Activated CD8-positive, alpha-beta memory T cell treated with anti-CD3 and anti-CD28 coated beads, Interleukin-2, amount 10 ng/mL, durations not matched to agents 7 days and 5 days (primary cell): ENCODE measurements at regions of chr16 and their contacts with region 1.

Region 1: DNA sequence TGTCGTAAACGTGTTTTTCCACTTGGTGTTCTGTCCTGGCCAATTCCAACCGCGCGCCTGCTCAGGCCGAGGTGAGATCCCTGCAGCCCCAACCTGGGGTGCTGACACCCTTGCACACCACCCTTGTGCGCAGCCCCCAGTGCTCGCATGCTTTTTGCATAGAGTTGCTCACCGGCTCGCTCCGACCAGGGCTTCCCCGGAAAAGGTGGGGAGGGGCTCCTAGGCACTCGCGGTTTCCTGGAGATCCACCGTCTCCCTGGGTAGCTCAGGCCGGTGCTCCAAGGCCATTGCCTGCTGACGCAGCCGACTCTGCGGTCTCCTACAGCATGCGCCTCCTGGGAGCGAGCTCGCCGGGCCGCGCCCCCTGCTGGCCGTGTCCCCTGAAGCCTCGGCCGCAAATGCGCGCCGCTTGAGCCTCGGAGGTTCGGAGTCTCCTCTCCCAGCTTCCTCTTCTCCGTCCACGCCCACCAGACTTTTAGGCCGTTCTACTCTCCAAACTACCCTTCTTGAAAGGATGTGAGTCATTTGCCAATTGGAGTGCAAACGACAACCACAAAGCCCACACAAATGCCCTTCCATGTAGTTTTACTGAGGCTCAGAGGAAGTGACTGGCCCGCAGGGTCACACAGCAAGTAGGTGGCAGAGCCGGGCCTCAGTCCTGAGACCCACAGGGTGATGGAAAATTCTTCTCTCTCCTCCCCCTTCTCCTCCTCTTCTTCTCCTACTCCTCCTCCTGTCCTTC is 7.2 kb upstream of the PDP2 start:
- DNase-seq: peak; percentile 99
- ATAC-seq: peak; percentile 89
- H3K4me3 Mint-ChIP-seq: peak overlapping the region; percentile 78
- H3K27ac Mint-ChIP-seq: peak overlapping the region; percentile 92
- H3K4me1 Mint-ChIP-seq: peaks cover 54% of the 10 kb centered on the region
- H3K27me3 Mint-ChIP-seq: no peaks in the 10 kb centered on the region

Region 2: GRCh38 chr16:66406534-66407221 is 466.4 kb before region 1 on chr16:
- CTCF ChIA-PET with region 1: interaction called, 25 read pairs
- DNase-seq: peak; percentile 91
- ATAC-seq: peak; percentile 93
- H3K4me3 Mint-ChIP-seq: peak overlapping the region; percentile 78
- H3K27ac Mint-ChIP-seq: peak overlapping the region; percentile 8
- H3K4me1 Mint-ChIP-seq: peaks cover 23% of the 10 kb centered on the region
- H3K27me3 Mint-ChIP-seq: peaks cover 14% of the 10 kb centered on the region

Region 3: DNA sequence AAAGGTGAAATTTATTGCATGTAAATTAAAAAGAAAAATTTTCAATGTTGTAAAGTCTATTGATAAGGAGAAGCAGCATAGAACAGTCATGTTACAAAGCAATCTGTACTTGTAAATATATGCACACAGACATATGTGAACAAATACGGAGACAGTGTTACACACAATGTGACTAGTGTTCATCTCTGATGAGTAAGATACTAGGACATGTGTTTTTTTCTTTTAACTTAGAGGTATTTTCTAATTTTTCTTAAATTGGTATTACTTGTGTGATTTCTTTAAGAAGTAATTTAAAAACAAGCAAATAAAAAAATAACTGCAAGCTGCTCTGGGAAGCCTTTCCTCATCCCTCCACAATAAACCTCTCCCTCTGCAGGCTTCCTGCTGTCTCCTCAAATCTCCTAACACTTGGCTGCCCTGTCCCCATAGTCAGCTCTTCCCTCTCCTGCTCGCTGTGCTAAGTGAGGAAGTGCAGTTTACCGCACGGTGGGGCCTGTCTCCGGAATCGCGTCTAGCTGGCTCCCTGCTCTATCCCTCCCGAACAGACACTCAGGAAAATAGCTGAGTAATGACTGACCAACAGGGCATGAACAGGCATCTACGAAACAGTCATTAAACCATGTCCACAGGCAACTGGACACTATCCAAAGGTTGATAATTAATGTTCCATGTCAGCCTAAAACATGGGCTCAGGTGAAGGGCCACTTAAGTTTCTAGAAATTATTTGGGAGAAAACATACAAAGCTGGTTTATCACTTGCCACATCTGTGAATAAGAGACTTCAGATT is 212.5 kb before region 1 on chr16:
- CTCF ChIA-PET with region 1: interaction called, 19 read pairs
- DNase-seq: no peak
- ATAC-seq: no peak
- H3K4me3 Mint-ChIP-seq: no peak overlapping the region
- H3K27ac Mint-ChIP-seq: no peak overlapping the region
- H3K4me1 Mint-ChIP-seq: peaks cover 3% of the 10 kb centered on the region
- H3K27me3 Mint-ChIP-seq: peaks cover 8% of the 10 kb centered on the region

Region 4: GRCh38 chr16:66751303-66751991 is 121.7 kb before region 1 on chr16 and contains the start of gene DYNC1LI2:
- CTCF ChIA-PET with region 1: interaction called, 12 read pairs
- DNase-seq: peak; percentile 86
- ATAC-seq: peak; percentile 87
- H3K4me3 Mint-ChIP-seq: peak within 1 kb of the TSS; percentile 85
- H3K27ac Mint-ChIP-seq: peak within 1 kb of the TSS; percentile 86
- H3K4me1 Mint-ChIP-seq: peaks cover 46% of the 10 kb centered on the region
- H3K27me3 Mint-ChIP-seq: peaks cover 24% of the 10 kb centered on the region
- total RNA-seq, gene DYNC1LI2: 71.6 to 81.0 TPM

Region 5: GRCh38 chr16:66830422-66831404 is 42.4 kb before region 1 on chr16 and contains the start of gene NAE1:
- CTCF ChIA-PET with region 1: interaction called, 160 read pairs
- DNase-seq: peak; percentile 90
- ATAC-seq: peak; percentile 96
- H3K4me3 Mint-ChIP-seq: peak within 1 kb of the TSS; percentile 71
- H3K27ac Mint-ChIP-seq: peak within 1 kb of the TSS; percentile 71
- H3K4me1 Mint-ChIP-seq: peaks cover 40% of the 10 kb centered on the region
- H3K27me3 Mint-ChIP-seq: no peaks in the 10 kb centered on the region
- total RNA-seq, gene NAE1: 81.1 to 88.5 TPM

Region 6: DNA sequence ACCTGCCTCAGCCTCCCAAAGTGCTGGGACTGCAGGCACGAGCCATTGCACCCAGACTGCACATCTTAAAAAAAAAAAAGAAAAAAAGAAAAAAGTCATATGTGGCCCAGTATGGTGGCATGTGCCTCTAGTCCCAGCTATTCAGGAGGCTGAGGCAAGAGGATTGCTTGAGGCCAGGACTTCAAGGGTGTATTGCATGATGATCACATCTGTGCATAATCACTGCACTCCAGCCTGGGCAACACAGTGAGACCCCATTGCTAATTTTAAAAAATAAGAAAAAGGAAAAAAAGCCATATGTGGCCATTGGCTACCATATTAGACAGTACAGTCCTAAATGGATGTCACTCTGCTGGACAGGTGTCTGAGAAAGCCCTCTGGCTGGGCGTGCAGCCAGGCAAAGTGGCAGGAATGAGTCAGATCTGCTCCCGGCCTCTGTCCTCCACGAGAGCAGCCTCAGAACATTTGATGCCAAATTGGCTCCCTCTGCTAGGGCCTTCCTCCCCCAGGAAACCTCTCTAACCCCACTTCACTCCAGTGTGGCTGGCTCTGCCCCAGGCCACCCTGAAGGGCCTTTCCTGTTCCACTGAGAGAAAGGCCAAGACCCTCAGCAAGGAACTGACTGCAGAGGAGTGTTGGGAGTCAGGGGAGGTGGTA is 14.2 kb before region 1 on chr16:
- CTCF ChIA-PET with region 1: interaction called, 18 read pairs
- DNase-seq: no peak
- ATAC-seq: no peak
- H3K4me3 Mint-ChIP-seq: no peak overlapping the region
- H3K27ac Mint-ChIP-seq: no peak overlapping the region
- H3K4me1 Mint-ChIP-seq: no peaks in the 10 kb centered on the region
- H3K27me3 Mint-ChIP-seq: no peaks in the 10 kb centered on the region

Region 7: GRCh38 chr16:66918803-66919568 is 45.9 kb after region 1 on chr16 and contains the start of gene CDH16:
- CTCF ChIA-PET with region 1: interaction called, 10 read pairs
- DNase-seq: no peak
- ATAC-seq: no peak
- H3K4me3 Mint-ChIP-seq: no peak within 1 kb of the TSS
- H3K27ac Mint-ChIP-seq: no peak within 1 kb of the TSS
- H3K4me1 Mint-ChIP-seq: no peaks in the 10 kb centered on the region
- H3K27me3 Mint-ChIP-seq: peaks cover 31% of the 10 kb centered on the region
- total RNA-seq, gene CDH16: not detected